ENCODE measurements at regions of chr1 and their contacts with region 1.

Region 1: GRCh38 chr1:183685112-183685713 is 32.1 kb upstream of the APOBEC4 start:
- DNase-seq: peak; percentile 63
- H3K4me3 ChIP-seq: no peak overlapping the region
- H3K27ac ChIP-seq: no peak overlapping the region
- H3K4me1 ChIP-seq: no peaks in the 10 kb centered on the region
- H3K27me3 ChIP-seq: no peaks in the 10 kb centered on the region
- CTCF ChIP-seq: peak; percentile 41 to 55
- POLR2A ChIP-seq: no peak

Region 2: DNA sequence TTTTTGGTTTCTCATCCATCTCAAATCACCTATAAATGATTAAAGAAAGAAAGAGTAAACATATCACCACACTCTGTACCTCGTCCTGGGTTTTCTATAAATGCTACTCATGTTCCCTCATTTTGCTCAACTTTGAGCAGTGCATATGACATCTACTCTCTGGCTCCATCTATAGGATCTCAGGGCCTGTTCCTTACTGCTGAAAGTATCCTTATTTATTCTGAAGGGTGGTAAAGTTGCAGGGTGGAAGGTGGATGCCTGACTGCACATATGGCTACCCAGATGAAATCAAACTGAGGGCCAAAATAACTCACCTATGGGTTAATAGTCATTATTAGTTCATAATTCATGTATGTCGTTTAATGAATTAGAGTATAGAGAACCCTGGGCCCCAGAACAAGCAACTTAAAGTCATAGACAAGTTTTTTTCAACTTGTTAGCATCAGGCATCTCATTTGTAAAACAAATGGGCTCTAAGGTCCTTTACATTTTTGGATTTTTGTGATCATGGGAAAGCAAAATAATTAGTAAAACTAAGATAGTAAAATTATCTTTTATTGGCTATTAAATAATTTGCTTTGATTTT is 141.5 kb before region 1 on chr1:
- CTCF ChIA-PET with region 1: no interaction called
- POLR2A ChIA-PET with region 1: no interaction called
- dilution Hi-C with region 1: no loop called
- intact Hi-C with region 1: loop called (anchors 5 kb)
- DNase-seq: peak; percentile 75
- H3K4me3 ChIP-seq: no peak overlapping the region
- H3K27ac ChIP-seq: no peak overlapping the region
- H3K4me1 ChIP-seq: no peaks in the 10 kb centered on the region
- H3K27me3 ChIP-seq: no peaks in the 10 kb centered on the region
- CTCF ChIP-seq: peak; percentile 62 to 71
- POLR2A ChIP-seq: no peak

Region 3: GRCh38 chr1:183590244-183591191 is 94.7 kb before region 1 on chr1 and contains the start of gene NCF2:
- CTCF ChIA-PET with region 1: no interaction called
- POLR2A ChIA-PET with region 1: no interaction called
- dilution Hi-C with region 1: no loop called
- intact Hi-C with region 1: no loop called
- DNase-seq: no peak
- H3K4me3 ChIP-seq: no peak within 1 kb of the TSS
- H3K27ac ChIP-seq: no peak within 1 kb of the TSS
- H3K4me1 ChIP-seq: no peaks in the 10 kb centered on the region
- H3K27me3 ChIP-seq: peaks cover 5 to 7% of the 10 kb centered on the region in 2 experiments
- CTCF ChIP-seq: no peak
- POLR2A ChIP-seq: no peak
- total RNA-seq, gene NCF2: not detected in 2 replicates

Region 4: DNA sequence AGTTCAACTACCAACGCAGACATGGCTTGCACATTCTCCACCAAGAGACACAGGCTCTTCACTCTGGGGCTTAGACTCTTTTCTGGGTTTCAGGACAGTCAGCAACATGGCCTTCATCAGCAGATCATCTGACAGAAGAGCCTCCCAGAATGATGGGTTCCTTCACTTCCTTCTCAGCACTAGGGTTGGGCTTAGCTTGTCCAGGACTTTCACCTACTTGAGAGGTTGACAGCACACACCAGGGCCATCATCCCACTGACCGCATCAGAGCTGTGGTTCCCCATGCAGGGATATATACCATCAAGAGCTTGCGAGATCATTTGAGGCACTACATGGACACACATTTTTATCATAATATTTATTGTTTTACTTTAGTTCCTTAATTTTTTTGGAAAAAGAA is 84.6 kb before region 1 on chr1:
- CTCF ChIA-PET with region 1: no interaction called
- POLR2A ChIA-PET with region 1: no interaction called
- dilution Hi-C with region 1: no loop called
- intact Hi-C with region 1: no loop called
- DNase-seq: no peak
- H3K4me3 ChIP-seq: no peak overlapping the region
- H3K27ac ChIP-seq: no peak overlapping the region
- H3K4me1 ChIP-seq: no peaks in the 10 kb centered on the region
- H3K27me3 ChIP-seq: peaks cover 0 to 3% of the 10 kb centered on the region in 2 experiments
- CTCF ChIP-seq: no peak
- POLR2A ChIP-seq: no peak

Region 5: GRCh38 chr1:183635606-183636333 is 49.4 kb before region 1 on chr1 and contains the start of gene ARPC5:
- CTCF ChIA-PET with region 1: interaction called, 9 read pairs
- POLR2A ChIA-PET with region 1: no interaction called
- dilution Hi-C with region 1: no loop called
- intact Hi-C with region 1: loop called (anchors 2 kb)
- DNase-seq: peak; percentile 100
- H3K4me3 ChIP-seq: peak within 1 kb of the TSS; percentile 93 to 100 (median 99)
- H3K27ac ChIP-seq: peak within 1 kb of the TSS; percentile 67
- H3K4me1 ChIP-seq: peaks cover 28% of the 10 kb centered on the region
- H3K27me3 ChIP-seq: no peaks in the 10 kb centered on the region
- CTCF ChIP-seq: no peak
- POLR2A ChIP-seq: peak; percentile 95
- total RNA-seq, gene ARPC5: 185 and 190 TPM in 2 replicates

Region 6: GRCh38 chr1:183655562-183656075 is 29.6 kb before region 1 on chr1:
- CTCF ChIA-PET with region 1: interaction called, 85 read pairs
- POLR2A ChIA-PET with region 1: no interaction called
- dilution Hi-C with region 1: no loop called
- intact Hi-C with region 1: loop called (anchors 1 kb)
- DNase-seq: peak; percentile 81
- H3K4me3 ChIP-seq: no peak overlapping the region
- H3K27ac ChIP-seq: no peak overlapping the region
- H3K4me1 ChIP-seq: peaks cover 27% of the 10 kb centered on the region
- H3K27me3 ChIP-seq: no peaks in the 10 kb centered on the region
- CTCF ChIP-seq: peak; percentile 73 to 81
- POLR2A ChIP-seq: no peak

Region 7: DNA sequence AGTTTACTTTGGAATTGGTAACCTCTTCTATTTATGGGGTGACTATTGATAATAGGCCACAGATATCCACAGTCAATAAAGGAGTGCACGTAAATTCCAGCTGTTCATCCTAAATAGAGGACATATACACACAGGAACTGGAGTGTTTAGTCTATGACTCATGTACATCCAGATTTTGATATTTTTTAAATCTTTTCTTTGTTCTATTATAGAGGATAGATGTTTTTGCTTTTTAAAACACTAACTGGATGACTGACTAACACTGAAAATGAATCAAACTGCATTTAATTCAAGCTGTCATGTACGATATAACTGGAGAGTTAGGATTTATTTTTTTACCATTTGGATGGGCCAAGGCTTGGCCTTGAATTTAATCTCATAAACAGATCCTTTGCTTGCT is 165.6 kb after region 1 on chr1:
- CTCF ChIA-PET with region 1: interaction called, 10 read pairs
- POLR2A ChIA-PET with region 1: no interaction called
- dilution Hi-C with region 1: no loop called
- intact Hi-C with region 1: no loop called
- DNase-seq: peak; percentile 63
- H3K4me3 ChIP-seq: no peak overlapping the region
- H3K27ac ChIP-seq: peak overlapping the region; percentile 60
- H3K4me1 ChIP-seq: peaks cover 38% of the 10 kb centered on the region
- H3K27me3 ChIP-seq: no peaks in the 10 kb centered on the region
- CTCF ChIP-seq: no peak
- POLR2A ChIP-seq: no peak

Region 8: DNA sequence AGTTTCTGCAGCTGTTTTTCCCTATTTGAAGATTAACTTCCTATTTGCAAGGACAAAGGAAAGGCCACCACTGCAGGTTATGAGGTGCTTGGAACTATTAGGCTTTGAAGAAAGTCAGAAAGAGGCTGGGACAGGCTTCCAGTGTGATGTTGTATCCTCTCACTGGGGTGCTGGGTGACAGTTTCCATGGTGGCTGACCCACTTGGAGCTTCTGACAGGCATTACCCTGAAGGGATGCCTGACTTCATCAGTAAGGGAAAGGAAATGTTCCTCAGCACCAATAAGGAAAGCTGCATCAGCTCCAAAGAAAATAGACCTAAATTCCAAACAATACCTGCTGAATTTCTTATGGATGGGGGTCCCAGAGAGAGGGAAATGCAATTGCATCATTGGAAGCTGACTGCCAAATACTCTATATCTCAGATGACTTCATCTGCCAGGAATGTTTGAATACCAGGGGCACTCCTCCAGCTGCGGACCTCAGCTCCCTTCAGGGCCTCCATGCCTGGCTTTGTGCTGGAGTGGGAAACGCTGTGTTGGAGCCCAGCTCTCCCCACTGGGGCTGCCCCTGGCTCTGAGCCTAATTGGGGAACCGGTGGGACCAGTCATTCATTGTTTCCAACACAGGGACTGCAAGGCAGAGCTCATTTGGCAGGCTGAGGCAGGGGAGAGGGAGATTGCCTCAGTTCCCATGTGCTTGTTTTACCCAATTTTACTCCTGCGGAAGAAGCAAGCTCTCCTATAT is 196.3 kb after region 1 on chr1:
- CTCF ChIA-PET with region 1: interaction called, 17 read pairs
- POLR2A ChIA-PET with region 1: no interaction called
- dilution Hi-C with region 1: no loop called
- intact Hi-C with region 1: no loop called
- DNase-seq: peak; percentile 98
- H3K4me3 ChIP-seq: no peak overlapping the region
- H3K27ac ChIP-seq: peak overlapping the region; percentile 77
- H3K4me1 ChIP-seq: peaks cover 43% of the 10 kb centered on the region
- H3K27me3 ChIP-seq: no peaks in the 10 kb centered on the region
- CTCF ChIP-seq: no peak
- POLR2A ChIP-seq: peak; percentile 56

Region 9: DNA sequence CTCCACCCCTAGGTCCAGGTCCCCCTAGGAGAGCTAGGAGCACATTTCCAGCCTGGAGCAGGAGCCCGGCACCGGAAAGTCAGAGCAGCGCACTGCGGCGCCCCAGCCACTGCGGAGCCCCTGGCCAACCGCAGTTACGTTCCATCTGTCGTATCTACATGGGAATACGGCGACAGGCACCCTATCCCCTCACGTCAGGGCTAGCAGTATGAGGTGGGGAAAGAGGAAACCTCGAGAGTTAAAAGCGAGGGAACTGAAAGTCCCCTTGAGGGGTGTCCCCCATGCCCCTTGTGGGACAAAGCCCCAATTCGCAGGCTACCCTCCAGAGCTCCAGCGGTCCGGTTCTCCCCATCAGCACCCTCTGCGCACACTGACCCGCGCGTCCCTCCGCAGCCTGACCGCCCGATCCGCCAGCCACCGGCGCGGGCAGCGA is 351.3 kb after region 1 on chr1:
- CTCF ChIA-PET with region 1: no interaction called
- POLR2A ChIA-PET with region 1: no interaction called
- dilution Hi-C with region 1: no loop called
- intact Hi-C with region 1: no loop called
- DNase-seq: peak; percentile 24
- H3K4me3 ChIP-seq: peak overlapping the region; percentile 2 to 27 (median 25)
- H3K27ac ChIP-seq: no peak overlapping the region
- H3K4me1 ChIP-seq: peaks cover 7% of the 10 kb centered on the region
- H3K27me3 ChIP-seq: peaks cover 52 to 69% of the 10 kb centered on the region in 2 experiments
- CTCF ChIP-seq: no peak
- POLR2A ChIP-seq: no peak